ENCODE measurements at regions of chr3 and their contacts with region 1.

Region 1: GRCh38 chr3:5194341-5195159 is 7.0 kb downstream of the EDEM1 start:
- DNase-seq: no peak
- ATAC-seq: peak; percentile 89 to 96 (median 92)
- H3K4me3 ChIP-seq: no peak overlapping the region
- H3K27ac ChIP-seq: peak overlapping the region; percentile 71
- H3K4me1 ChIP-seq: peaks cover 58% of the 10 kb centered on the region
- H3K27me3 ChIP-seq: no peaks in the 10 kb centered on the region
- CTCF ChIP-seq: no peak

Region 2: GRCh38 chr3:4656059-4656458 is 538.5 kb before region 1 on chr3:
- intact Hi-C with region 1: loop called in 1 of 2 experiments (anchors 10 kb)
- DNase-seq: peak; percentile 43 to 71
- ATAC-seq: peak; percentile 80 to 94 (median 84)
- H3K4me3 ChIP-seq: no peak overlapping the region
- H3K27ac ChIP-seq: no peak overlapping the region
- H3K4me1 ChIP-seq: no peaks in the 10 kb centered on the region
- H3K27me3 ChIP-seq: no peaks in the 10 kb centered on the region
- CTCF ChIP-seq: peak; percentile 79

Region 3: DNA sequence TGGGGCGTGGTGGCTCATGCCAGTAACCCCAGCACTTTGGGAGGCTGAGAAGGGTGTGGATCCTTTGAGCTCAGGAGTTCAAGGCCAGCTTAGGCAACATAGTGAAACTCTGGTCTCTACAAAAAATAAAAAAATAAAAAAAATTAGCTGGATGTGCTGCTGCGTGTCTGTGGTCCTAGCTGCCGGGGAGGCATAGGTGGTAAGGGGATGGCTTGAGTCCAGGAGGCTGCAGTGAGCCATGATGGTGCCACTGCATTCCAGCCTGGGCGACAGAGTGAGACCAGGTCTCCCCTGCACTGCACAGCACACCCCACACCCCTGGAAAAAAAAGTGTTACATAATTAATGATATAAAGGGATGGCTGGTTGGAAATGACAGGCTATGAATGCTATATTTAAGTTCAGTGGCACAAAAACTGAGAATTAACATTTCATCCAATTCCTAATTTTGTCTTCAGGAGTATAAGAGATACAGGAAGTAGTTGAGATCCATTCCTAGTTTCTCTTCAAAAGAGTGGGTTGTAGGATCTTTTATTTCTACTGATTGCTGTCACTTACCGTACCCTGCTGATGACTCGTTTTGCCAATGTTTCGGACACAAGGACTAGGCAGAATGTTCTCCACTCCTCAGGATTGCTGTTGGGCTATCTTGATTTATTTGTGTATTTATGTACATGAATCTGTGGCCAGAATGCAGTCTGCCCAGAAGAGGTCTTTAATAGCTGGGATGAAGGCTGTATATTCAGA is 60.7 kb before region 1 on chr3:
- intact Hi-C with region 1: no loop called
- DNase-seq: no peak
- ATAC-seq: peak in 2 of 4 donors; percentile 28 to 37
- H3K4me3 ChIP-seq: no peak overlapping the region
- H3K27ac ChIP-seq: peak overlapping the region; percentile 18
- H3K4me1 ChIP-seq: peaks cover 73% of the 10 kb centered on the region
- H3K27me3 ChIP-seq: no peaks in the 10 kb centered on the region
- CTCF ChIP-seq: no peak

Region 4: GRCh38 chr3:5330152-5330810 is 135.7 kb after region 1 on chr3:
- intact Hi-C with region 1: no loop called
- DNase-seq: no peak
- ATAC-seq: no peak
- H3K4me3 ChIP-seq: no peak overlapping the region
- H3K27ac ChIP-seq: no peak overlapping the region
- H3K4me1 ChIP-seq: no peaks in the 10 kb centered on the region
- H3K27me3 ChIP-seq: no peaks in the 10 kb centered on the region
- CTCF ChIP-seq: no peak

Measured in psoas muscle (tissue), 8 donors.